Dorsolateral prefrontal cortex (tissue), 120 donors: ENCODE measurements at regions of chr12 and their contacts with region 1.

Region 1: GRCh38 chr12:125340791-125341190 is 275.6 kb downstream of the AACS start:
- DNase-seq: peak in 2 of 10 donors; percentile 27 to 33
- H3K4me3 ChIP-seq: peak overlapping the region in 4 of 59 donors; percentile 2 to 26 (median 5)
- H3K27ac ChIP-seq: peak overlapping the region in 51 of 59 donors; percentile 4 to 81 (median 59)
- H3K27me3 ChIP-seq: no peaks in the 10 kb centered on the region
- CTCF ChIP-seq: peak in 16 of 56 donors; percentile 7 to 31 (median 17)

Region 2: GRCh38 chr12:125092872-125093680 is 247.7 kb before region 1 on chr12:
- intact Hi-C with region 1: loop called in 1 of 2 experiments (anchors 5 kb)
- DNase-seq: peak in 6 of 10 donors; percentile 39 to 70 (median 58)
- H3K4me3 ChIP-seq: peak overlapping the region in 25 of 59 donors; percentile 4 to 51 (median 21)
- H3K27ac ChIP-seq: peak overlapping the region in 57 of 59 donors; percentile 5 to 91 (median 72)
- H3K27me3 ChIP-seq: no peaks in the 10 kb centered on the region
- CTCF ChIP-seq: peak in 44 of 56 donors; percentile 14 to 65 (median 38)

Region 3: GRCh38 chr12:125518074-125518473 is 177.3 kb after region 1 on chr12:
- intact Hi-C with region 1: loop called in 1 of 2 experiments (anchors 5 kb)
- DNase-seq: no peak
- H3K4me3 ChIP-seq: no peak overlapping the region
- H3K27ac ChIP-seq: peak overlapping the region in 8 of 59 donors; percentile 1 to 71 (median 12)
- H3K27me3 ChIP-seq: no peaks in the 10 kb centered on the region
- CTCF ChIP-seq: no peak